ENCODE measurements at regions of chr15 and their contacts with region 1.

Region 1: DNA sequence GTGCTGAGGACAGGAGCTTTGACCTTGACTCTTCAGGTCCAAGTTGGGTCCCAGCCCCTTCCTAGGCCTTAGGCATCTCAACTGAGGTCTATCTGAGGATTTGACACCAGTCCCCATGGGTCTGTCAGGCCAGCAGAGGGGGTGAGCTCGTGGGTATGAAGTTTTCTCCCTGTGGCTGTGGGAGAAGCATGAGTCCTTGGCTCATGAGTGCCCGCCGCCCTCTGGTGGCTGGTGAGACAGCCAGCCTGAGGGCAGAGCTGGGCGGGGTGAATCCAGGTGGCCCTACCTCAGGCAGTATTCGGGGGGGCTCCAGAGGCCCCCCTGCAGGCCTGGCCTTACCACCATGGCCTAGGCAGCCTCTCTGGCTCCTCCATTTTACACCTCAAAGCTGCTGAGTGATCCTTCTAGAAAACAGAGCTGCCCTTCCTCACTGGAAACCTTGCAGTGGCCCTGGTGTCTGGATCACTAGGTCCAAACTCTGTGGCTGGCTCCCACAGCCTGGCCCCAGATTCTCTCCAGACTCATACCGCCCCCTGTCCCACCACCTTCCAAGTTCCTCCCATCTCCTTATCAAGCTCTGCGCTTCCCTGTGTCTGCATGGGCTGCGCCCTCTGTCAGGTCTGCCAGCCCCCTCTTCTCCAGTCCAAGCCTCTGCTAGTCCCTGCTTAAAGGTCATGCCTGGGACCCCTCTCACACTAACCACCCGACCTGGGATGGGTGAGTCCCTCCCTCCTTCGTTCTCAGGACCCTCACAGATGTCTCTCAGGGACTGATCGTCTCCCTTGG is 16.1 kb downstream of the SH2D7 start:
- DNase-seq: peak; percentile 92
- ATAC-seq: peak; percentile 78
- H3K4me3 Mint-ChIP-seq: no peak overlapping the region
- H3K27ac Mint-ChIP-seq: peak overlapping the region; percentile 74
- H3K4me1 Mint-ChIP-seq: peaks cover 60% of the 10 kb centered on the region
- H3K27me3 Mint-ChIP-seq: no peaks in the 10 kb centered on the region

Region 2: DNA sequence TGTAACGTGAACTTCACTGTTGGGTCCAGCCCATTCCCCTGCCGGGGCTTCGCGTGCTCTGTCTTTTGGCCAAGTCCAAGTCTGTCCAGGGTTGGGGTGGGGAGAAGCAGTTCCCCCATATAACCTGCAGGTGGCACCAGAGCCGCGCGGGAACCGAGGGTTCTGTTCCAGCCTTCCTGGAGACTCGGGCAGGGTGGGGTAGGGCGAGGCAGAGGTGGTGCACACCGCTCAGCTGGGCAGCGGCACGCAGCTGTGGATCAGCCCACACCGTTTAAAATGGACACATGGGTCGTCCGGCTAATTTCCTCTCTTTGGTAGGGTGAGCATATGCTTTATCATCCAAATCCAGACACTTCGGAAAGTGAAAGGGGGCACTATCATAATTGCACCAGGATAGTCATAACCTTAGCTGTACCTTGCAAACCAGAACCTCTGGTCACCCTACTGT is 149.0 kb before region 1 on chr15:
- CTCF ChIA-PET with region 1: interaction called, 133 read pairs
- POLR2A ChIA-PET with region 1: no interaction called
- DNase-seq: peak; percentile 84
- ATAC-seq: peak; percentile 99
- H3K4me3 Mint-ChIP-seq: peak overlapping the region; percentile 39
- H3K27ac Mint-ChIP-seq: no peak overlapping the region
- H3K4me1 Mint-ChIP-seq: peaks cover 19% of the 10 kb centered on the region
- H3K27me3 Mint-ChIP-seq: peaks cover 27% of the 10 kb centered on the region

Region 3: DNA sequence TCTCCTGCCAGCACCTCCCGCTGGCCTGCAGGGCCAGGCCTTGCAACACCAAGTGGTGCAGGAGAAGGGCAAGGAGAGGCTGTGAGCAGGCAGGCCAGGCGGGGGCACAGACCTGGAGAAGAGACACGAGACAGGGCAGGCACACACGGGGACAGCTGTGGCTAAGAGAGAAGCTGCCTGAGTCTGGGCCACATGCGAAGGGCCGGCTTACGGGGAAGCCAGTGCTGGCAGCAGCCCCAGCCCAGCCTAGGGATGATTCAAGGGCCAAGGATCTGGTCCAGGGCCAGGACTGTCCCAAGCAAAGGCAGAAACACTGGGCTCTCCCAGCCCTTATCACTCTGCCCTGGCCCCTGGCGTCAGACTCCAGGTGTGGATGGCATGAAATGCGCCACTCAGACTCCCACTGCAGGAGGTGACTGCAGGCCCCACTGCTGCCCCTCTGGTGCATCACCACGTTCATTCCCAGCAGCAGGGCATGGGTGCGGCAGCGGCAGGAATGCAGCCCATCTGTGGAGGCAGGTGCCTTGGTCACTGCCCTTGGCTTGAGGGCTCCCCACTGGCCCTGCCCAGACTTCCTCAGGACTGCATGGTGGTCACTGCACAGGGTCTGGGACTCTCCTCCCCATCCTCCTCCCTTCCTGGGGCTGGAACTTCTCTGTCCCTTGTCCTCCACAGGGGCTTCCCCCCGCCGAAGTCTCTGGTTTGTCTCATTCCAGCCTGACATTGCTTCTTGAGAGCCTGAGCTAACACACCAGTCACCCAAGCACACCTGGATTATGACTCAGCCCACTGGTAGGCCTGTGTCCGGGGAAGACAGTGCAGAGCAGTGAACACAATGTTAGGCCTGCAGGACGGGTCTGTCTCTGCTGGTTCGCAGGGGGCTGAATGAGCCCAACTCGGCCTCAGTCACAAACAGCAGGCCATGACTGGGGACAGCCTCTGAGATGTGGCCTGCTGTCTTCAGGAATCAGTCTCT is 100.3 kb before region 1 on chr15:
- CTCF ChIA-PET with region 1: interaction called, 83 read pairs
- POLR2A ChIA-PET with region 1: no interaction called
- DNase-seq: no peak
- ATAC-seq: no peak
- H3K4me3 Mint-ChIP-seq: no peak overlapping the region
- H3K27ac Mint-ChIP-seq: peak overlapping the region; percentile 46
- H3K4me1 Mint-ChIP-seq: peaks cover 31% of the 10 kb centered on the region
- H3K27me3 Mint-ChIP-seq: no peaks in the 10 kb centered on the region

Region 4: GRCh38 chr15:78044407-78045155 is 63.9 kb before region 1 on chr15:
- CTCF ChIA-PET with region 1: interaction called, 60 read pairs
- POLR2A ChIA-PET with region 1: interaction called, 14 read pairs
- DNase-seq: peak; percentile 48
- ATAC-seq: peak; percentile 59
- H3K4me3 Mint-ChIP-seq: peak overlapping the region; percentile 5
- H3K27ac Mint-ChIP-seq: peak overlapping the region; percentile 79
- H3K4me1 Mint-ChIP-seq: peaks cover 94% of the 10 kb centered on the region
- H3K27me3 Mint-ChIP-seq: no peaks in the 10 kb centered on the region

Region 5: GRCh38 chr15:78065284-78065872 is 43.1 kb before region 1 on chr15:
- CTCF ChIA-PET with region 1: interaction called, 103 read pairs
- POLR2A ChIA-PET with region 1: interaction called, 3 read pairs
- DNase-seq: no peak
- ATAC-seq: peak; percentile 18
- H3K4me3 Mint-ChIP-seq: no peak overlapping the region
- H3K27ac Mint-ChIP-seq: no peak overlapping the region
- H3K4me1 Mint-ChIP-seq: peaks cover 10% of the 10 kb centered on the region
- H3K27me3 Mint-ChIP-seq: no peaks in the 10 kb centered on the region

Region 6: GRCh38 chr15:78093242-78094020 is 15.1 kb before region 1 on chr15:
- CTCF ChIA-PET with region 1: interaction called, 23 read pairs
- POLR2A ChIA-PET with region 1: interaction called, 12 read pairs
- DNase-seq: peak; percentile 40
- ATAC-seq: peak; percentile 72
- H3K4me3 Mint-ChIP-seq: peak overlapping the region; percentile 45
- H3K27ac Mint-ChIP-seq: peak overlapping the region; percentile 73
- H3K4me1 Mint-ChIP-seq: peaks cover 44% of the 10 kb centered on the region
- H3K27me3 Mint-ChIP-seq: no peaks in the 10 kb centered on the region

Region 7: DNA sequence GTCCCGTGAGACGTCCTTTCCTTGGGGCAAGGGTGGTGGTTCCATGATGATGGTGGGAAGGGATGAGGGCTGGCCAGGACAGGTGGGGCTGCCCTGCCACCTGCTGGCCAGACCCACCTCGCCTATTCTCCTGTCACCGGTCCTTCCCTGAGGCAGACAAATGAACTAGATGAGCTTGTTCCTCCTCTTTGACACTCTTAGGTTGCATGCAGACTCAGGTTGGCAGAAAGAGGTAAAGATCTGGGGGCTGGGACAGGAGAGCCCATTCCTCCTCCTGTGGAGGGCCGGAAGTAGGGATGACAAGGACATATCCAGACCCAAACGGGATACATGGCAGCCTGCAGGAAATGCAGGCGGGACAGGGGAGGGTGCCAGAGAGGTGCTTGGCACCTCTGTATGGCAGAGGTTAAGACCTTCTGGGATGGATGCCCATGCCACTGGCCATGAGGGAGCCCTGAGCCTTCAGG is 87.3 kb after region 1 on chr15:
- CTCF ChIA-PET with region 1: interaction called, 157 read pairs
- POLR2A ChIA-PET with region 1: no interaction called
- DNase-seq: peak; percentile 62
- ATAC-seq: peak; percentile 90
- H3K4me3 Mint-ChIP-seq: no peak overlapping the region
- H3K27ac Mint-ChIP-seq: no peak overlapping the region
- H3K4me1 Mint-ChIP-seq: no peaks in the 10 kb centered on the region
- H3K27me3 Mint-ChIP-seq: peaks cover 5% of the 10 kb centered on the region

Region 8: DNA sequence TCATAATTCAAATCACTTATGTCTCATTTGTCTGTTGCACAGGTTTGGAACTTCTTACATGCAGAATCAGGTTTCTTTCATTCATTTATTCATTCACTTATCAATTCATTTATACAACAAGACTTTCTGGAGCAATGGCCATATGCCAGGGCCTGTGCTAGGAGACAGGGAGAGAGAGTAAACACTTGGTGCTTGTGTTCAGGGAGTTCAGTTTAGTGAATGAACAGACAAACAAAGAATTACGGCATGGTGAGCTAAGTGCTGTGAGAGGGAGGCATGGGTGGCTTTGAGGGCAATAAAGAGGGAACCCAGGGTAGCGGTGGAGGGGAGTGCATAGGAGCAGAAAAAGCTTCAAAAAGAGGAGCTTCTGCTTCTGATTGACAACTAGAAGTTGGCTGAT is 321.0 kb after region 1 on chr15:
- CTCF ChIA-PET with region 1: no interaction called
- POLR2A ChIA-PET with region 1: no interaction called
- DNase-seq: no peak
- ATAC-seq: no peak
- H3K4me3 Mint-ChIP-seq: no peak overlapping the region
- H3K27ac Mint-ChIP-seq: no peak overlapping the region
- H3K4me1 Mint-ChIP-seq: peaks cover 26% of the 10 kb centered on the region
- H3K27me3 Mint-ChIP-seq: peaks cover 13% of the 10 kb centered on the region